Mammary epithelial cell (primary cell): ENCODE measurements at regions of chr11 and their contacts with region 1.

Region 1: DNA sequence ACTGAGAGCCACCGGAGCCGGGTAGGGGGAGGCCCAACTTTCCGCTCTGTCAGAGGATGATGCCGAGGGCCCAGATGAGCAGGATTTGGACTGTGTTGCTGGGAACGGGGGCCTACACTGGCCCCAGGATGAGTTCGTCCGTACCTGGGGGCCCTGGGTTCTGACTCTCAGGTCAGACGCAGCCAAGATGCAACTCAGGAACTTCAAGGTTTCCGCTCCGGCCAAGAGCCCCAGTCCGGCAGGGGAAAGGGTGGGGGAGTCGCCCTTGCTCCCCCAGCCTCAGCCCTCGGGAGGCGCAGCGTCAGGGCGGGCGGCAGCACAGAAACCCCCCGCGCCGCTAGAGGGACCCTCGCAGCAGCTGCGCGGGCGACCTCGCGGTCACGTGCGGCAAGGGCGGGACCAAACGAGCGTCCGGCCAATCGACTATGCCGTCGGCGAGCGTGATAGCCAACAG is 241 bp upstream of the ARL2 start:
- DNase-seq: peak; percentile 74
- H3K4me3 ChIP-seq: peak overlapping the region; percentile 64 to 85 (median 72)
- H3K27ac ChIP-seq: peak overlapping the region; percentile 90
- H3K4me1 ChIP-seq: peaks cover 11% of the 10 kb centered on the region
- H3K27me3 ChIP-seq: no peaks in the 10 kb centered on the region
- CTCF ChIP-seq: no peak

Region 2: DNA sequence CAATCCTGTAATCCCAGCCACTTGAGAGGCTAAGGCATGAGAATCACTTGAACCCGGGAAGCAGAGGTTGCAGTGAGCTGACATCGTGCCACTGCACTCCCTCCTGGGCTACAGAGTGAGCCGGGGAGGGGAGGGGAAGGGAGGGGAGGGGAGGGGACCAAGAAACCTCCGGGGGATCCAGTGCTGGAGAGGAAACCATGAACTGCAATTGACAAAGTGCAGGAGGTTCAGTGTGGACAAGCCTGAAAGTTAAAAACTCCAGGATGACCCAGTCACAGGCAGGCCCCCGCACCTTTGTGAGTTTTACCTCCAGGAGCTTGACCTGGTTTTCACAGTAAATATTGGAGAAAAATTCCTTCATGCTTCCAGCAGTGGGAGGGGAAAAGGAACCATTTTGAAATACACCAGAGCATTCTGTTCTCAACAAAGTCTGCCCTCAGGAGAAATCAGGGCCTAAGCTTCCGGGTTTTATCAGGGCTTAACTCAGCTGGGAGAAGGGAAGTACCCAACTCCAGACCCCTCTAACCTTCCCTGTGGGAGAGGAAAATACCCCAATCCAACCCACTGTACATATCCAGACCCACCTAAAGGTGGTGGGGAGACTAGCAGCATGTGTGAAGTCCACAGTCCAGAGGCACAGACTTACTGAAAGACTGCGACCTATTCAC is 1229.7 kb before region 1 on chr11:
- CTCF ChIA-PET with region 1: no interaction called
- dilution Hi-C with region 1: no loop called
- in situ Hi-C with region 1: no loop called
- intact Hi-C with region 1: no loop called
- DNase-seq: no peak
- H3K4me3 ChIP-seq: no peak overlapping the region
- H3K27ac ChIP-seq: no peak overlapping the region
- H3K4me1 ChIP-seq: no peaks in the 10 kb centered on the region
- H3K27me3 ChIP-seq: no peaks in the 10 kb centered on the region
- CTCF ChIP-seq: no peak

Region 3: GRCh38 chr11:64854534-64855429 is 158.9 kb before region 1 on chr11:
- CTCF ChIA-PET with region 1: no interaction called
- dilution Hi-C with region 1: loop called (anchors 5 kb)
- in situ Hi-C with region 1: no loop called
- intact Hi-C with region 1: no loop called
- DNase-seq: peak; percentile 93
- H3K4me3 ChIP-seq: no peak overlapping the region
- H3K27ac ChIP-seq: peak overlapping the region; percentile 68
- H3K4me1 ChIP-seq: peaks cover 48% of the 10 kb centered on the region
- H3K27me3 ChIP-seq: no peaks in the 10 kb centered on the region
- CTCF ChIP-seq: no peak

Region 4: DNA sequence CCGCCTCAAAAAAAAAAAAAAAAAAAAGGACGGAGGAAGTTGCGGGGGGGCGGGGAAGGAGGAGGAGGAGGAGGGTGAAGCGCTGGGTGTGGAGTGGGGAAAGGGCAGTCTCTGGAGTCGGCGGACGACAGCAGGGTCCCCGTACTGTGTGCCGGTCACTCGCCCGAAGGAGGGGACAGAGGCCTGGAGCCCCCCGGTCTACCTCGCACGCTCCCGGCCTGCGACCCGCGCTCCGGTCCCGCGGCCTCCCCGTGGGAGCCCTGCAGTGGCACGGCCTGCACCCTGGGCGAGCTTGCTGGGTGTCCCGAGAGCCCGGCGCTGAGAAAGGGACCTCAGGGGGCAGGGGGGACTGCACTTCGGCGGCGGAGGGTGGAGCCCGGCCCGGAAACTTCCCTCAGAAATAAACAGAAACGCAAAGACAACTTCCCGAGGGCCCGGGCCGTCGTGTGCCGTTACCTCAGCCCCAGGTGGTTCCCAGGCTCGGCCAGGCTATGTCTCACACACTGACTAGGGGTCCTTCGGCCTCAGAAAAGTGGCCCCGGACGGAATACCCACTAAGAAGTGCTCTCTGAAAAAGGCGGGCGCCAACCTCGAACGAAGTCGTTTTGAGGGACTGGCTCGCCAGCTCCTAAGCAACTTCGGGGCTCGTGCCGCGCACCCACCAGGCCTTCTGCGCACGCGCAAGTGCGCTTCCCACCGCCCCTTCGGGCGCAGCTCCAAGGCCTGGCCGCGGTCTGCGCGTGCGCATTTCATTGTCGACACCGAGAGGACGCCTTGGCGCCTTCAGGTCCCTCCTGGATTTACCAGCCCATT is 42.1 kb before region 1 on chr11 and contains the start of gene MAJIN:
- CTCF ChIA-PET with region 1: no interaction called
- dilution Hi-C with region 1: loop called (anchors 5 kb)
- in situ Hi-C with region 1: no loop called
- intact Hi-C with region 1: no loop called
- DNase-seq: no peak
- H3K4me3 ChIP-seq: no peak within 1 kb of the TSS
- H3K27ac ChIP-seq: peak within 1 kb of the TSS; percentile 36
- H3K4me1 ChIP-seq: peaks cover 20% of the 10 kb centered on the region
- H3K27me3 ChIP-seq: no peaks in the 10 kb centered on the region
- CTCF ChIP-seq: no peak
- total RNA-seq, gene MAJIN: not detected

Region 5: GRCh38 chr11:65047581-65048422 is 34.1 kb after region 1 on chr11:
- CTCF ChIA-PET with region 1: no interaction called
- dilution Hi-C with region 1: no loop called
- in situ Hi-C with region 1: no loop called
- intact Hi-C with region 1: no loop called
- DNase-seq: no peak
- H3K4me3 ChIP-seq: no peak overlapping the region
- H3K27ac ChIP-seq: no peak overlapping the region
- H3K4me1 ChIP-seq: peaks cover 9% of the 10 kb centered on the region
- H3K27me3 ChIP-seq: no peaks in the 10 kb centered on the region
- CTCF ChIP-seq: no peak

Region 6: DNA sequence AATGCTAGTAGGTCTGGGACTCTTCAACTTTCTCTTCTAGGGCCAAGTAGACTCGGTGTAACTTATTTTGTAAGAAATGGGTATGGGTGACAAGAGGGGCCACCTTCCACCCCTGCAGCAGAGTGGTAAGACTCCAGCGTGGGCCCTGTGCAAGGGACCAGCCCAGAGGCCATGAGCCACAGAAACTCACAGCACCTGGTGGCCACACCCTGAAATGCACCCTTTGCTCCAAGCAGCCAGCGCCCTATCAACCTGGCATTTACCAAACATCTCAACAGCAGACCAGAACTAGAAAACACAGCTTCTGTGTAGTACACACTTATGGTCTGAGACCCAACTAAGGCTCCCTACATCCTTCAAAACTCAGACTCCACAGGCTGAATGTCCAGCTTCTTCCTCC is 64.4 kb after region 1 on chr11:
- CTCF ChIA-PET with region 1: no interaction called
- dilution Hi-C with region 1: loop called (anchors 5 kb)
- in situ Hi-C with region 1: no loop called
- intact Hi-C with region 1: loop called (anchors 1 kb)
- DNase-seq: peak; percentile 14
- H3K4me3 ChIP-seq: no peak overlapping the region
- H3K27ac ChIP-seq: no peak overlapping the region
- H3K4me1 ChIP-seq: peaks cover 30% of the 10 kb centered on the region
- H3K27me3 ChIP-seq: no peaks in the 10 kb centered on the region
- CTCF ChIP-seq: peak; percentile 72 to 75

Region 7: GRCh38 chr11:65117216-65118096 is 103.7 kb after region 1 on chr11 and contains the start of gene ZNHIT2:
- CTCF ChIA-PET with region 1: no interaction called
- dilution Hi-C with region 1: no loop called
- in situ Hi-C with region 1: no loop called
- intact Hi-C with region 1: loop called (anchors 1 kb)
- DNase-seq: peak; percentile 98
- H3K4me3 ChIP-seq: peak within 1 kb of the TSS; percentile 74 to 82 (median 81)
- H3K27ac ChIP-seq: peak within 1 kb of the TSS; percentile 74
- H3K4me1 ChIP-seq: peaks cover 33% of the 10 kb centered on the region
- H3K27me3 ChIP-seq: no peaks in the 10 kb centered on the region
- CTCF ChIP-seq: peak; percentile 84 to 95
- total RNA-seq, gene ZNHIT2: 13.6 to 15.2 TPM